Heart left ventricle (tissue), 16 donors: ENCODE measurements at regions of chr11 and their contacts with region 1.

Region 1: GRCh38 chr11:85854557-85855340 is 434 bp upstream of the CCDC83 start:
- DNase-seq: peak; percentile 91 to 96 (median 94)
- ATAC-seq: peak; percentile 98 to 99 (median 98)
- H3K4me3 ChIP-seq: peak overlapping the region; percentile 27 to 68 (median 60)
- H3K27ac ChIP-seq: peak overlapping the region; percentile 67 to 91 (median 82)
- H3K4me1 ChIP-seq: peaks cover 0 to 16% (median 7%) of the 10 kb centered on the region in 12 donors
- H3K27me3 ChIP-seq: no peaks in the 10 kb centered on the region
- CTCF ChIP-seq: peak; percentile 90 to 99 (median 95)
- POLR2A ChIP-seq: no peak

Region 2: DNA sequence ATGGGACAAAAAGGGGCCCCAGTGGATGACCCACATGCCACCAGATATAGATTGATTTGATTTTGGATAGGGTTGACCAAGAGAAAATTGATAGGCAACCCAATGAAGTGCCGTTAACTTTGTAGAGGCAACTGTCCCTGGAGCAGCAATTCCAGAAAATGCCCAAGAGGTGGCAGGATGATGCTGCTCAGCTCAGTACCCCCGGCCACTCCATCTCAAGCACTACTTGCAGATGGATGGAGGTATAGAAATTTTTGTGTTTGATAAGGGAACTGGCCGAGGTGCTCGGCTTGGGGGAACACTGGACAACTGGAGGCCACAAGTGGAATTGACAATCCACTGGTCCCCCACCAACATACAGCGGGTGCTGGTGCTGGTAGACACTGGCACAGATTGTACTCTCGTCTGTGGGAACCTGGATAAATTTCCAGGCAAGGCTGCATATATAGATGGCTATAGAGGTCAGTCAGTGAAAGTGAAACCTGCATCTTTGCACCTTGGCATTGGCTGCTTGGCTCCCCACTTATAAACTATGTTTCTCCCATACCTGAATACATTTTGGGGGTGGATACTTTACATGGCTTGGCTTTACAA is 86.7 kb after region 1 on chr11:
- intact Hi-C with region 1: loop called in 5 of 10 experiments (anchors 5 to 10 kb)
- DNase-seq: peak in 2 of 5 donors; percentile 51 to 63
- ATAC-seq: peak in 3 of 4 donors; percentile 79 to 85 (median 83)
- H3K4me3 ChIP-seq: no peak overlapping the region
- H3K27ac ChIP-seq: no peak overlapping the region
- H3K4me1 ChIP-seq: peaks cover 0 to 19% (median 7%) of the 10 kb centered on the region in 12 donors
- H3K27me3 ChIP-seq: no peaks in the 10 kb centered on the region
- CTCF ChIP-seq: peak; percentile 63 to 85 (median 78)
- POLR2A ChIP-seq: no peak

Region 3: GRCh38 chr11:86193297-86194095 is 338.7 kb after region 1 on chr11:
- intact Hi-C with region 1: loop called in 1 of 10 experiments (anchors 1 kb)
- DNase-seq: peak; percentile 72 to 88 (median 84)
- ATAC-seq: peak; percentile 97 to 99 (median 99)
- H3K4me3 ChIP-seq: peak overlapping the region in 9 of 12 donors; percentile 24 to 45 (median 38)
- H3K27ac ChIP-seq: peak overlapping the region; percentile 11 to 88 (median 68)
- H3K4me1 ChIP-seq: peaks cover 0 to 65% (median 14%) of the 10 kb centered on the region in 12 donors
- H3K27me3 ChIP-seq: no peaks in the 10 kb centered on the region
- CTCF ChIP-seq: peak; percentile 60 to 89 (median 79)
- POLR2A ChIP-seq: no peak

Region 4: GRCh38 chr11:86244522-86245368 is 390.0 kb after region 1 on chr11 and contains the start of gene EED:
- intact Hi-C with region 1: loop called in 1 of 10 experiments (anchors 1 kb)
- DNase-seq: peak; percentile 96 to 98 (median 97)
- ATAC-seq: peak; percentile 85 to 97 (median 94)
- H3K4me3 ChIP-seq: peak within 1 kb of the TSS; percentile 68 to 97 (median 86)
- H3K27ac ChIP-seq: peak within 1 kb of the TSS; percentile 94 to 100 (median 99)
- H3K4me1 ChIP-seq: peaks cover 0 to 48% (median 33%) of the 10 kb centered on the region in 12 donors
- H3K27me3 ChIP-seq: peaks cover 0 to 3% (median 0%) of the 10 kb centered on the region in 9 donors
- CTCF ChIP-seq: no peak
- POLR2A ChIP-seq: peak in 1 of 2 donors; percentile 54
- total RNA-seq, gene EED: 4.9 to 13.3 (median 11.4) TPM

Region 5: DNA sequence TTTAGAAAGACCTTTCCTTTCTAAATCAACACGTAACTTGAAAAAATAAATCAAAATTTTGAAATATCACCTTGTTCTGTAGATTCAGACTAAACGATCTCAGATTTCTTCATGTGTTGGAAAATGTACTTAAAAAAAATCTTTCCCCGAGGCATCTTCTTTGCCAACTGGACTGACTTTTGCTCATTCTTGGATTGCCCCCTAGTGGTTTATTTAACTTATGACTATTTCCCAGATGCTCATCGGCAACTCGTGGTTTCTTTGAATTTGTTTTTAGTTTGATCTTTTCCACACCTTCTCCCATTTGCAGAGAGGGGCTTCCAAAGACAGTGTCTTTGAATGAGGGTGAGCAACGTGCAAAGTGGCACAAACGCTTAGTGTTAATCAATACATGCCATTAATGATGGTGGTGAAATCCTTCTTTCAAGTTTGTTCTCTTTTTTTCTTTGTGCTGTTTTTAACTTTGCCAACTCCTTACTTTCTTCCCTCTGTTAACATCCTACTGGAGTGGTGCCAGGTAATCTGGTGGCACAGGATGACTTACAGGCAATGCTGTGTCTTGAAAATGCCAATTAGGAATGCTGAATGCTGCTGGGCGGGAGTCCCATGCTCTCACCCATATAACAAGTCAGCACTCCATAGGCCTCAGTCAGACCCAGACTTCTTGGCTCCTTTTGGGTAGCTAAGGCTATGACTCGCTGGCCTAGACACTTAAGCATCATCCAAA is 963.9 kb after region 1 on chr11:
- intact Hi-C with region 1: loop called in 2 of 10 experiments (anchors 10 kb)
- DNase-seq: no peak
- ATAC-seq: peak in 3 of 4 donors; percentile 24 to 45 (median 43)
- H3K4me3 ChIP-seq: no peak overlapping the region
- H3K27ac ChIP-seq: peak overlapping the region in 1 of 12 donors; percentile 80
- H3K4me1 ChIP-seq: peaks cover 0 to 43% (median 14%) of the 10 kb centered on the region in 12 donors
- H3K27me3 ChIP-seq: no peaks in the 10 kb centered on the region
- CTCF ChIP-seq: peak; percentile 65 to 88 (median 82)
- POLR2A ChIP-seq: no peak